Activated CD4-positive, alpha-beta memory T cell treated with anti-CD3 and anti-CD28 coated beads for 36 hours (primary cell): ENCODE measurements at regions of chr17 and their contacts with region 1.

Region 1: GRCh38 chr17:78313735-78314648 is 45.9 kb downstream of the SOCS3 start:
- DNase-seq: peak; percentile 86
- H3K4me3 Mint-ChIP-seq: peak overlapping the region; percentile 59
- H3K27ac Mint-ChIP-seq: peak overlapping the region; percentile 87
- H3K4me1 Mint-ChIP-seq: peaks cover 49% of the 10 kb centered on the region
- H3K27me3 Mint-ChIP-seq: peaks cover 1% of the 10 kb centered on the region

Region 2: GRCh38 chr17:78258323-78259191 is 55.4 kb before region 1 on chr17:
- CTCF ChIA-PET with region 1: no interaction called
- POLR2A ChIA-PET with region 1: no interaction called
- intact Hi-C with region 1: loop called (anchors 2 kb)
- DNase-seq: peak; percentile 90
- H3K4me3 Mint-ChIP-seq: peak overlapping the region; percentile 73
- H3K27ac Mint-ChIP-seq: peak overlapping the region; percentile 86
- H3K4me1 Mint-ChIP-seq: peaks cover 45% of the 10 kb centered on the region
- H3K27me3 Mint-ChIP-seq: no peaks in the 10 kb centered on the region